Activated CD4-positive, alpha-beta T cell treated with anti-CD3 and anti-CD28 coated beads for 36 hours (primary cell): ENCODE measurements at regions of chr17 and their contacts with region 1.

Region 1: DNA sequence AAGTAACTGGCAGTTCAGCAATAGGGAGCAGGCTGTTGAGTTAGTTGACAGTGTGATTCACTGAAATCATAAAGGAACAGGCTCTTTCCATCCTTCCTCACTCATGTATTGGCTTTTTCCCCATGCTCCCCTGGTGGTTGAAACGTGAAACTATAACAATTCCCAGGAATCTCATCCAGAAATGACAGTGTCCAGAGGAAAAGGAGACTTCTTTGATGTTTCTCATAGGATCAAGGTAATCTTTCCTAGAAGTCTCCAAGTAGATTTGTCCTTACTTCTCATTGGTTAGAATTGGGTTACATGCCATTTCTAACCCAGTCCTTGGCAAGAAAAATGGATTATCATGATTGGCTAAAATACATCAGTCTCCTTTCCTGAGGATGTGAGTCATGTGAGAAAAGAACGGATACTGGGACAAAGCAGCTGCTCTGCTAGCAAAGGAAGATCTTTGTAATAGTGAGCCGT is 14.4 kb downstream of the TTC19 start:
- DNase-seq: no peak
- ATAC-seq: no peak
- H3K4me3 Mint-ChIP-seq: no peak overlapping the region
- H3K27ac Mint-ChIP-seq: no peak overlapping the region
- H3K4me1 Mint-ChIP-seq: peaks cover 6% of the 10 kb centered on the region
- H3K27me3 Mint-ChIP-seq: no peaks in the 10 kb centered on the region

Region 2: DNA sequence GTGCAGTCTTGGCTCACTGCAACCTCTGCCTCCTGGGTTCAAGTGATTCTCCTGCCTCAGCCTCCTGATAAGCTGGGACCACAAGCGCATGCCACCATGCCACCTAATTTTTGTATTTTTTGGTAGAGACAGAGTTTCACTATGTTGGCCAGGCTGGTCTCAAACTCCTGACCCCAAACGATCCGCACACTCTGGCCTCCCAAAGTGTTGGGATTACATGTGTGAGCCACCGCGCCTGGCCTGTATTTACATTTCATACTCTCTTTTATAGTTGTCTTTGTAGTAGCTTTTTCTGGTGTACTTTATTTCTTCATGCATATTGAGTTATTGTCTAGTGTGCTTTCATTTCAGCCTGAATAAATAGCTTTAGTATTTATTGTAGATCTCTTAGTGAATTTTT is 79.1 kb before region 1 on chr17:
- CTCF ChIA-PET with region 1: no interaction called
- POLR2A ChIA-PET with region 1: no interaction called
- intact Hi-C with region 1: no loop called
- DNase-seq: no peak
- ATAC-seq: no peak
- H3K4me3 Mint-ChIP-seq: no peak overlapping the region
- H3K27ac Mint-ChIP-seq: no peak overlapping the region
- H3K4me1 Mint-ChIP-seq: no peaks in the 10 kb centered on the region
- H3K27me3 Mint-ChIP-seq: no peaks in the 10 kb centered on the region

Region 3: DNA sequence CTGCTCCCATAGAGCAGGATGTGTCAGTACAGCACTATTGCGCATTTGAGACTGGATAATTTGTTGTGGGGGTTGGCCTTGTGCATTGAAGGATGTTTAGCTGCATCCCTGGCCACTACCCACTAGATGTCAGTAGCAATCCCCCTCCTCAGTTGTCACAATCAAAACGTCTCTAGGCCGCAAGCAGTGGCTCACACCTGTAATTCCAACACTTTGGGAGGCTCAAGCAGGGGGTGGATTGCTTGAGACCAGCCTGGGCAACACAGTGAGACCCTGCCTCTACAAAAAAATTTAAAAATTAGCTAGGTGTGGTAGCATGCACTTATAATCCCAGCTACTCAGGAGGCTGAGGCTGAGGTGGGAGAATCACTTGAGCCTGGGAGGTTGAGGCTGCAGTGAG is 290.9 kb after region 1 on chr17:
- CTCF ChIA-PET with region 1: no interaction called
- POLR2A ChIA-PET with region 1: interaction called, 13 read pairs
- intact Hi-C with region 1: no loop called
- DNase-seq: peak; percentile 32
- ATAC-seq: peak; percentile 79
- H3K4me3 Mint-ChIP-seq: no peak overlapping the region
- H3K27ac Mint-ChIP-seq: no peak overlapping the region
- H3K4me1 Mint-ChIP-seq: no peaks in the 10 kb centered on the region
- H3K27me3 Mint-ChIP-seq: no peaks in the 10 kb centered on the region

Region 4: GRCh38 chr17:16363749-16364536 is 350.0 kb after region 1 on chr17:
- CTCF ChIA-PET with region 1: no interaction called
- POLR2A ChIA-PET with region 1: no interaction called
- intact Hi-C with region 1: no loop called
- DNase-seq: peak; percentile 89
- ATAC-seq: peak; percentile 98
- H3K4me3 Mint-ChIP-seq: no peak overlapping the region
- H3K27ac Mint-ChIP-seq: no peak overlapping the region
- H3K4me1 Mint-ChIP-seq: no peaks in the 10 kb centered on the region
- H3K27me3 Mint-ChIP-seq: no peaks in the 10 kb centered on the region